Kidney (tissue), 22 donors: ENCODE measurements at regions of chr20 and their contacts with region 1.

Region 1: DNA sequence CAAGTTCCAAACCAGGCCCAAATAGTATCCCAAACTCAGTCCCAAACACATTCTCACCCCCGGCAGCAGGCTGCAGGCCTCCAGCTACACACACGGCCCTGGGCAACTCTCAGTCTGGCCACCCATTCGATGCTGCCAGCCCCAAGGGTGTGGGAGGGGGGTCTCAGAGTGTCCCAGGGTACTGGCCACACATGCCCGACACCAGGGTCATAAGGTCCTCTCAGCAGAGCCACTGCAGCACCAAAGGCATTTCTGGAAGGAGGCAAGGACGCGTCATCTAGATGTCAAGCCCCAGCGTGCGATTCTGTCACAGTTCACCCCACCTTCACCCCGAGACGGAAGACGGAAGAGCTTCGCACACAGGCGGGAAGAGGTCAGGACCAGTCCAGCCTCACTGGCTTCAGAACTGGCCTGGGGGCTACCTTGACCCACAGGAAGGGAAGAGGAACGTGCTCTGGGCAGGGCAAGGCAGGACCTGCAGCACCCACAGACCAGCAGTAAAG is 9.5 kb downstream of the MYL9 start:
- DNase-seq: peak in 3 of 5 donors; percentile 38 to 80 (median 49)
- H3K4me3 ChIP-seq: no peak overlapping the region
- H3K27ac ChIP-seq: no peak overlapping the region
- H3K4me1 ChIP-seq: peaks cover 0 to 13% (median 0%) of the 10 kb centered on the region in 3 donors
- H3K27me3 ChIP-seq: no peaks in the 10 kb centered on the region
- CTCF ChIP-seq: no peak

Region 2: GRCh38 chr20:36605399-36606157 is 54.7 kb after region 1 on chr20 and contains the start of gene RAB5IF:
- intact Hi-C with region 1: loop called (anchors 10 kb)
- DNase-seq: peak; percentile 99 to 100 (median 99)
- H3K4me3 ChIP-seq: peak within 1 kb of the TSS; percentile 61 to 90 (median 87)
- H3K27ac ChIP-seq: peak within 1 kb of the TSS; percentile 88 to 93
- H3K4me1 ChIP-seq: peaks cover 0 to 16% (median 16%) of the 10 kb centered on the region in 3 donors
- H3K27me3 ChIP-seq: no peaks in the 10 kb centered on the region
- CTCF ChIP-seq: peak; percentile 87
- total RNA-seq, gene RAB5IF: 71.0 TPM

Region 3: DNA sequence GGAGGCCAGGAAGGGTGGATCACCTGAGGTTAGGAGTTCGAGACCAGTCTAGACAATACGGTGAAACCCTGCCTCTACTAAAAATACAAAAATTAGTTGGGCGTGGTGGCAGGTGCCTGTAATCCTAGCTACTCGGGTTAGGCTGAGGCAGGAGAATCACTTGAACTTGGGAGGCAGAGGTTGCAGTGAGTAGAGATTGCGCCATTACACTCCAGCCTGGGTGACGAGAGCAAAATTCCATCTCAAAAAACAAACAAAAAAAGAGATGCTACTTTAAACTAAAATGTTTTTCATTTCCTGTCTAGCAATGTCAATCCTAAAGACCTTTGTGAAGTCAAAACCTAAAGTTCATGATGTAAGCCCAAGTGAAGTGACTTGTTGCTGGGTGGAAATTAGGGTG is 209.8 kb after region 1 on chr20:
- intact Hi-C with region 1: no loop called
- DNase-seq: no peak
- H3K4me3 ChIP-seq: no peak overlapping the region
- H3K27ac ChIP-seq: no peak overlapping the region
- H3K4me1 ChIP-seq: no peaks in the 10 kb centered on the region
- H3K27me3 ChIP-seq: no peaks in the 10 kb centered on the region
- CTCF ChIP-seq: no peak